Stomach (tissue), 19 donors: ENCODE measurements at regions of chr22 and their contacts with region 1.

Region 1: GRCh38 chr22:41091132-41092022 is 1.0 kb upstream of the EP300 start:
- DNase-seq: peak; percentile 99 to 100
- H3K4me3 ChIP-seq: peak overlapping the region; percentile 71 to 98 (median 86)
- H3K27ac ChIP-seq: peak overlapping the region; percentile 99 to 100 (median 100)
- H3K4me1 ChIP-seq: peaks cover 12 to 42% (median 26%) of the 10 kb centered on the region in 4 donors
- H3K27me3 ChIP-seq: no peaks in the 10 kb centered on the region
- CTCF ChIP-seq: no peak
- EP300 ChIP-seq: no peak
- POLR2A ChIP-seq: peak in 2 of 4 donors; percentile 52 to 88

Region 2: GRCh38 chr22:40757071-40757470 is 334.3 kb before region 1 on chr22:
- intact Hi-C with region 1: no loop called
- DNase-seq: no peak
- H3K4me3 ChIP-seq: no peak overlapping the region
- H3K27ac ChIP-seq: no peak overlapping the region
- H3K4me1 ChIP-seq: no peaks in the 10 kb centered on the region
- H3K27me3 ChIP-seq: no peaks in the 10 kb centered on the region
- CTCF ChIP-seq: no peak
- EP300 ChIP-seq: no peak
- POLR2A ChIP-seq: no peak

Region 3: GRCh38 chr22:40950962-40951794 is 140.2 kb before region 1 on chr22 and contains the start of gene RBX1:
- intact Hi-C with region 1: loop called (anchors 5 kb)
- DNase-seq: peak; percentile 98 to 99
- H3K4me3 ChIP-seq: peak within 1 kb of the TSS; percentile 66 to 88 (median 80)
- H3K27ac ChIP-seq: peak within 1 kb of the TSS; percentile 93 to 96 (median 96)
- H3K4me1 ChIP-seq: peaks cover 17 to 44% (median 31%) of the 10 kb centered on the region in 4 donors
- H3K27me3 ChIP-seq: no peaks in the 10 kb centered on the region
- CTCF ChIP-seq: no peak
- EP300 ChIP-seq: no peak
- POLR2A ChIP-seq: peak in 2 of 4 donors; percentile 29 to 85
- total RNA-seq, gene RBX1: 4.0 to 69.0 (median 17.1) TPM